IMR-90 (cell line): ENCODE measurements at regions of chr11 and their contacts with region 1.

Region 1: DNA sequence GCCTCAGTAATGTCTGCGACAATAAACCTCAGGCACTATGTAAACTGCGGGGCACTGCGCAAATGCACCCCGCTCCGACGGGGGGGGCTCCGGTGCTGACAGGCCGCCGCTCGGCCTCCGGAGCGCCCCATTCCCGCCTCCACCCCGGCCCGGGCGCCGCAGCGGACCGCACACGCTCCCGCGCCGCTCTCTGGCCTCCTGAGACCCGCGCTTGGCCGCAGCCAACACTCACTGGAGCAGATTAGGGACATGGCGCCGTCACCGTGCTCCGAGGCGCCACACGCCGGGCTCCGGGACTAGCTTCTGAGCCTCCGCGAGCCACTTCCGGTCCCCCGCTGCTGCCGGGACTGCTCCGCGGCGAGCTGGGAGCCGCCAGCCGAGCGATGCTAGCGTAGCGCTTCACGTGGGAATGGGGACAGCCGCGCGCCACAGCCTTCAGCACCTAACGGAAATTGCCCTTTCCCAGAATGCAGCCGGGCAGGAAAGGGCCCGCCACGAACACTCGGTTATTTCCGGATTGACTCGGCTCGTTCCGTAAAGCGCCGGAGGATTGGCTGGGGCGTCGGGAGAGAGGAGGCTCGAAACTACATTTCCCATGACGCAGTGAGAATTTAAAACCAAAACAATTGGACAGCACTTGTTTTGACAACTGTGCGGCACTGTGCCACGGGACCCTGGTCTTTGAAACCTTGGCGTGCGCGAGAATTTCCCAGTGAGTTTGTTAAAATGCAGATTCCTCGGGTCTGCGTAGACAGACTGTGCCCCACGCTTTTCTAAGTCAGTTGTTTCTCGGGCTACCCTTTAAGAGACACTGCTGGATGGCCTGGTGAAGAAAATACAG is at the start of gene PRPF19:
- DNase-seq: peak; percentile 92
- ATAC-seq: peak; percentile 98
- H3K4me3 ChIP-seq: peak within 1 kb of the TSS; percentile 69
- H3K27ac ChIP-seq: peak within 1 kb of the TSS; percentile 74
- H3K4me1 ChIP-seq: peaks cover 3% of the 10 kb centered on the region; the same call in 1 of the 2 replicates
- H3K27me3 ChIP-seq: peaks cover 10% of the 10 kb centered on the region
- CTCF ChIP-seq: no peak
- POLR2A ChIP-seq: peak; percentile 82
- RAD21 ChIP-seq: no peak
- total RNA-seq, gene PRPF19: 29.7 and 29.8 TPM in 2 replicates

Region 2: GRCh38 chr11:59573234-59573633 is 1333.1 kb before region 1 on chr11:
- CTCF ChIA-PET with region 1: no interaction called
- POLR2A ChIA-PET with region 1: no interaction called
- dilution Hi-C with region 1: no loop called
- in situ Hi-C with region 1: loop called (anchors 25 kb)
- intact Hi-C with region 1: no loop called
- DNase-seq: peak; percentile 94
- ATAC-seq: peak; percentile 94
- H3K4me3 ChIP-seq: no peak overlapping the region
- H3K27ac ChIP-seq: peak overlapping the region; percentile 96
- H3K4me1 ChIP-seq: peaks cover 16% of the 10 kb centered on the region
- H3K27me3 ChIP-seq: no peaks in the 10 kb centered on the region
- CTCF ChIP-seq: no peak
- POLR2A ChIP-seq: no peak
- RAD21 ChIP-seq: no peak

Region 3: GRCh38 chr11:60485986-60486385 is 420.4 kb before region 1 on chr11:
- CTCF ChIA-PET with region 1: no interaction called
- POLR2A ChIA-PET with region 1: no interaction called
- dilution Hi-C with region 1: no loop called
- in situ Hi-C with region 1: no loop called
- intact Hi-C with region 1: no loop called
- DNase-seq: no peak
- ATAC-seq: no peak
- H3K4me3 ChIP-seq: no peak overlapping the region
- H3K27ac ChIP-seq: no peak overlapping the region
- H3K4me1 ChIP-seq: no peaks in the 10 kb centered on the region
- H3K27me3 ChIP-seq: no peaks in the 10 kb centered on the region
- CTCF ChIP-seq: no peak
- POLR2A ChIP-seq: no peak
- RAD21 ChIP-seq: no peak

Region 4: DNA sequence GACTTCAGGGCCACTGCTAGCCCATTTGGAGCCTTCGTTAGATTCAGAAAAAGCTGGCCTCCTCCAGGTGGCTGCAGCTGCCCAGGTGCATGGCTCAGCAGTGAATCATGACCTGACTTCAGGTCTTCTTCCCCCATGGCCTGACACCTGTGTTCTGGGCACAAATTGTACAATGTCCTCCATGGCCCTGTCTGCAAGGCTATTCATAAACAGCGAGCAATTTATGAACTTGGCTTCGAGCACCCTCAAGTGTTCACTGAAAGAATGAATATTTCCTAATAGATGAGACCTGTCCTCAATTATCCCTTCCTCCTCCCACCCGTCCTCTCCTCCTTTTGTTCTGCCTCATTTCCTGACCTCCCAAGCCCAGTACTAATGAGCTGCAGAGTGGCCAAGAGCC is 267.1 kb after region 1 on chr11:
- CTCF ChIA-PET with region 1: no interaction called
- POLR2A ChIA-PET with region 1: no interaction called
- dilution Hi-C with region 1: no loop called
- in situ Hi-C with region 1: no loop called
- intact Hi-C with region 1: loop called (anchors 5 kb)
- DNase-seq: peak; percentile 34
- ATAC-seq: peak; percentile 49
- H3K4me3 ChIP-seq: no peak overlapping the region
- H3K27ac ChIP-seq: no peak overlapping the region
- H3K4me1 ChIP-seq: no peaks in the 10 kb centered on the region
- H3K27me3 ChIP-seq: peaks cover 59% of the 10 kb centered on the region
- CTCF ChIP-seq: peak; percentile 53
- POLR2A ChIP-seq: no peak
- RAD21 ChIP-seq: peak; percentile 57